Posterior vena cava (tissue), 2 donors: ENCODE measurements at regions of chr20 and their contacts with region 1.

Region 1: GRCh38 chr20:29319725-29320124 is 1937.7 kb upstream of the DEFB115 start:
- DNase-seq: peak; percentile 68

Region 2: DNA sequence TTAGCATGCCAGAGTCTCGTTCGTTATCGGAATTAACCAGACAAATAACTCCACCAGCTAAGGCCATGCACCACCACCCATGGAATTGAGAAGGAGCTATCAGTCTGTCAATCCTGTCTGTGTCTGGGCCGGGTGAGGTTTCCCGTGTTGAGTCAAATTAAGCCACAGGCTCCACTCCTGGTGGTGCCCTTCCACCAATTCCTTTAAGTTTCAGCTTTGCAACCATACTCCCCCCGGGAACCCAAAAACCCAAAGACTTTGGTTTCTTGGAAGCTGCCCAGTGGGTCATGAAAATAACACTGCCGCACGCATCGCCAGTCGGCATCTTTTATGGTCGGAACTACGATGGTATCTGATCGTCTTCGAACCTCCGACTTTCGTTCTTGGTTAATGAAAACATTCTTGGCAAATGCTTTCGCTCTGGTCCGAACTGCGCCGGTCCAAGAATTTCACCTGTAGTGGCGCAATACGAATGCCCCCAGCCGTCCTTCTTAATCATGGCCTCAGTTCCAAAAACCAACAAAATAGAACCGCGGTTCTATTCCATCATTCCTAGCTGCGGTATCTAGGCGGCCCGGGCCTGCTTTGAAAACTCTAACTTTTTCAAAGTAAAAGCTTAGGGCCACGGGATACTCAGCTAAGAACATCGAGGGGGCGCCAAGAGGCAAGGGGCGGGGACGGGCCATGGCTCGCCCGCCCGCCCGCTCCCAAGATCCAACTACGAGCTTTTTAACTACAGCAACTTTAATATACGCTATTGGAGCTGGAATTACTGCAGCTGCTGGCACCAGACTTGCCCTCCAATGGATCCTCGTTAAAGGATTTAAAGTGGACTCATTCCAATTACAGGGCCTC is 20.7 kb before region 1 on chr20:
- intact Hi-C with region 1: loop called in 1 of 2 experiments (anchors 1 kb)
- DNase-seq: no peak